Left colon (tissue), 2 donors: ENCODE measurements at regions of chr4 and their contacts with region 1.

Region 1: DNA sequence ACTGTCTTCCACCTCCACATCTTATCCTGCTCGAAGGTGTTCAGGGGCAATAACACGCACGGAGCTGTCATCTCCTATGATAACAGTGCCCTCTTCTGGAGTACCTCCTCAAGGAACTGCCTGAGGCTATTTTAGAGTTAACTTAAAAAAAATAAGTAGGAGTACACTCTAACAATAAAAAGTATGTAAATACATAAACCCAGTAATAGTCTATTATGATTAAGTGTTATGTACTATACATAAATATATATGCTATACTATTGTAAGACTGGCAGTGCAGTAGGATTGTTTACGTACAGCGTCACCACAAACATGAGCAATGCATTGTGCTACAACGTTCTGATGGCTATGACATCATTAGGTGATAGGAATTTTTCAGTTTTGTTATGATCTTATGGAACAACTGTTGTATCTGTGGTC is 34.5 kb upstream of the TLR2 start:
- DNase-seq: no peak
- ATAC-seq: peak; percentile 32

Region 2: GRCh38 chr4:153137159-153137558 is 512.4 kb before region 1 on chr4:
- intact Hi-C with region 1: loop called in 1 of 2 experiments (anchors 5 kb)
- DNase-seq: no peak
- ATAC-seq: peak; percentile 43

Region 3: DNA sequence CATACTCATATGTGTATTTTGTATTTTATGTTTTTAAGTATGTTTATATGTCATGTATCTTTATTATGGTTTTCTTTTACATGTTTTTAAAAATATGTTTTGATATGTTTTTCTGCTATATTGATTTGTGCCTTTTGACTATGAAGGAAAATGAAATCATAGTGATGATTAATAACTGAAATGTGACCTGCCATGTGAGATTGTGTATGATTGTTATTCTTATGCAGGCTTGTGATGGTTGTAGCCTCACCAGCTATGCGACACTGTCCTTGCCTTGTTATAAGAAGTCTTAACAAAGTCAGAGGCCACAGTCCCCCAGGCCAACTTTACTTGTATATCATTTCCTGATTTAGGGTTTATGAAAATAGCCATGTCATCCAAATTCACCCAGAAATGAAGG is 100.2 kb before region 1 on chr4:
- intact Hi-C with region 1: no loop called
- DNase-seq: no peak
- ATAC-seq: no peak

Region 4: GRCh38 chr4:153987291-153987690 is 337.7 kb after region 1 on chr4:
- intact Hi-C with region 1: no loop called
- DNase-seq: no peak
- ATAC-seq: no peak

Region 5: GRCh38 chr4:154084864-154085263 is 435.3 kb after region 1 on chr4:
- intact Hi-C with region 1: no loop called
- DNase-seq: no peak
- ATAC-seq: no peak